WTC11 (cell line): ENCODE measurements at regions of chr6 and their contacts with region 1.

Region 1: DNA sequence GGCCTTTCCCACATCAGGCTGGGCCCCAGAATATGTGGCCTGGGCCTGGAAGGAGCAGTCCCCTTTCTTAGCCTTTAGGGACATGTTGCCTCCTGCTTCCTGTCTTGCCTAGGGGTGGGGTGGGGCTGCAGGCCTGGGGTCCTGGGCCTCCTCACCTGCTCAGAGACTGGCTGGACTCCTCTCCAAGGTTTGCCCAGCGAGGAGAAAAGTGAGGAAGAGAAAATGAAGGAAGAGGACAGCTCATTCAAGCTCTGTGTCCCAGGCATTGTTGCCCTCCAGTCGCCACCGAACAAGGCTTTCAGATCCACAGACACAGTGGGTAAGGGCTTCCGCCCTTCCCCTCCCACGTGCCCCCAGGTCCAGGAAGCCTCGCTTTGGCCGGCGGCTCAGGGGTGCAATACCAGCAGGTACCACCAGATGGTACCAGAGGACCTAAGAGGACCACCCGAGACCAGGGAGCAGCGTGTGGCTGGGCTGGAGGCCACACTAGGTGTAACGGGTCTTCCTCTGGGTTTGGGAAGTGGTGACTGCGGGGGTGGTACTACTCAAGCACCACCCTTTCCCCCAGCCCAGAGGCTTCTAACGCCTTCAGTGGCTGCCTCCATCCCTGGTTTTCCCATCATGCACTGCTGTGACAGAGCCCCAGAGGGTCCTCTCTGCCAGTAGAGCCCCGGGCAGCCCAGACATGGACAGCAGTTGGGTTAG is 5.5 kb upstream of the BAK1 start:
- DNase-seq: peak; percentile 92
- ATAC-seq: peak; percentile 71
- H3K4me3 Mint-ChIP-seq: no peak overlapping the region
- H3K27ac Mint-ChIP-seq: no peak overlapping the region
- H3K4me1 Mint-ChIP-seq: peaks cover 13% of the 10 kb centered on the region
- H3K27me3 Mint-ChIP-seq: no peaks in the 10 kb centered on the region
- CTCF ChIP-seq: peak; percentile 97

Region 2: DNA sequence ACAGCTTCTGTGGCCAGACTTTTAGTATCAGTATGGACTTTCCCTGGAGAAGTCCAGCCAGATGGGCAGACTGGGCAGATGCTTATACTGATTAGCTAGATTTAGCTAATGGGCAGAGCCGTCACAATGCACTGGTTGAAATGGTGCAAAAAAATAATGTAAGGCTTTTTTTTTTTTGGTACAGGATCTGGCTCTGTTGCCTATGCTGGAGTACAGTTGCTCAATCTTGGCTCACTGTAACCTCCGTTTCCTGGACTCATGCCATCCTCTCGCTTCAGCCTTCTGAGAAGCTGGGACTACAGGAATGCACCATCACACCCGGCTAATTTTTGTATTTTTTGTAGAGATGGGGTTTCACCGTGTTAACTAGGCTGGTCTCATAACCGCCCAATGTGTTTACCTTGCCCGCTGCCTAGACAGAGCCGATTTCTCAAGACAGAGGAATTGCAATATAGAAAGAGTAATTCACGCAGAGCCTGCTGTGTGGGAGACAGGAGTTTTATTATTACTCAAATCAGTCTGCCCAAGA is 210.3 kb before region 1 on chr6:
- CTCF ChIA-PET with region 1: no interaction called
- POLR2A ChIA-PET with region 1: no interaction called
- DNase-seq: no peak
- ATAC-seq: no peak
- H3K4me3 Mint-ChIP-seq: no peak overlapping the region
- H3K27ac Mint-ChIP-seq: no peak overlapping the region
- H3K4me1 Mint-ChIP-seq: peaks cover 34% of the 10 kb centered on the region
- H3K27me3 Mint-ChIP-seq: no peaks in the 10 kb centered on the region; the same call in 1 of the 2 replicates
- CTCF ChIP-seq: no peak

Region 3: DNA sequence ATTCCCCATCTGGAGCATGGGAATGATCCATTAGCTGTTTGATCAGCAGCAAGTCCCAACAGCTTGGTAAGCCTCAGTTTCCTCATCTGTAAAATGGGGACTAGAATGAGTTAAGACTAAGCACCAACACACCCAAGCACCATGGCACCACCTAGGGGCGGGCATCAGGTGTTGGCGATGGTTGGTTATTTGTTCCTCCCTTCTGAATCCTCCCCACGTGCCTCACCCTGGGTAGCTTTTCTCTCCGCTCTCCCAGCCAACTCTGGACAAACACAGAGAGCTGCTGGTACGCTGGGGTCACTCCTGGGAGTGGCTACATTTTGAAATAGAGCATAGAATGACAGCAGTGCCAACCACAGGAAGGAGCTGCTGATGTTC is 22.2 kb after region 1 on chr6:
- CTCF ChIA-PET with region 1: interaction called, 25 read pairs
- POLR2A ChIA-PET with region 1: no interaction called
- DNase-seq: no peak
- ATAC-seq: no peak
- H3K4me3 Mint-ChIP-seq: no peak overlapping the region
- H3K27ac Mint-ChIP-seq: no peak overlapping the region
- H3K4me1 Mint-ChIP-seq: peaks cover 45% of the 10 kb centered on the region
- H3K27me3 Mint-ChIP-seq: no peaks in the 10 kb centered on the region; the same call in 1 of the 2 replicates
- CTCF ChIP-seq: no peak

Region 4: GRCh38 chr6:33620856-33621710 is 35.5 kb after region 1 on chr6 and contains the start of gene ITPR3:
- CTCF ChIA-PET with region 1: interaction called, 31 read pairs
- POLR2A ChIA-PET with region 1: interaction called, 3 read pairs
- DNase-seq: no peak
- ATAC-seq: peak; percentile 47
- H3K4me3 Mint-ChIP-seq: peak within 1 kb of the TSS; percentile 91
- H3K27ac Mint-ChIP-seq: no peak within 1 kb of the TSS; the same call in 1 of the 2 replicates
- H3K4me1 Mint-ChIP-seq: peaks cover 46% of the 10 kb centered on the region
- H3K27me3 Mint-ChIP-seq: peaks cover 15% of the 10 kb centered on the region
- CTCF ChIP-seq: no peak
- total RNA-seq, gene ITPR3: 42.5 to 47.3 TPM (median 42.9 TPM) in 3 replicates

Region 5: DNA sequence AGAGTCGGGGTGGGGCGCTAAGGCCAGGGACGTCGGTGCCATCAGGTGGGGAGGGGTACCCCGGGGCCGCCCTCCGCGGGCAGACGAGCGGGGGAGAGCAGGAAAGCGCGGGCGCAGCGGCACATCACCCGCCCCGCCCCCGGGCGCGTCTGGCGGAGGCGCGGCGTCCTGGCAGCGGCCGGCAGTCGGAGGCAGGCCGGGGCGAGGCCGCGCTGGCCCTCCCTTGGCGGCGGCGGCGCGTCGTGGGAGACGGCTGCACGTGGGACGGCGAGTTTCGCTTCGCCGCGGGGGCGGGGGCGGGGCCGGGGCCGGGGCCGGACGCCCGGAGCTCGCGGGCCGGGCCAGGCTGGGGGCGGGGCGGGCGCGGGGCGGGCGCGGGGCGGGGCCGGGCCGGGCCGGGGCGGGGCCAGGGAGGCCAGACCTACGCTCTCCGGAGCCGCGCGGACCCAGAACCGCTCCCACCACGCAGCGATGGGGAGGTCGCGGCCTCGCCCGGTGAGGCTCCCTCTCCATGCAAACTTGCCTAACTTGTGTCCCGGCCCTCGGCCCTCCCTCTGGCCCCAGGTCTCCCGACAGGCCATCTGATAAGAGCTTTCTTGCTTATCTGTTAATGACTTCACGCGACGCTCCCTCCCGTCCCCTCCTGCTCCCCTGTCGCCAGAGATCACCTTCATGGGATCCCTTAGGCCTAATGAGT is 48.1 kb after region 1 on chr6:
- CTCF ChIA-PET with region 1: interaction called, 71 read pairs
- POLR2A ChIA-PET with region 1: no interaction called
- DNase-seq: peak; percentile 58
- ATAC-seq: peak; percentile 69
- H3K4me3 Mint-ChIP-seq: peak overlapping the region; percentile 83
- H3K27ac Mint-ChIP-seq: peak overlapping the region; percentile 47
- H3K4me1 Mint-ChIP-seq: peaks cover 59% of the 10 kb centered on the region
- H3K27me3 Mint-ChIP-seq: peaks cover 9% of the 10 kb centered on the region; the same call in 1 of the 2 replicates
- CTCF ChIP-seq: no peak

Region 6: DNA sequence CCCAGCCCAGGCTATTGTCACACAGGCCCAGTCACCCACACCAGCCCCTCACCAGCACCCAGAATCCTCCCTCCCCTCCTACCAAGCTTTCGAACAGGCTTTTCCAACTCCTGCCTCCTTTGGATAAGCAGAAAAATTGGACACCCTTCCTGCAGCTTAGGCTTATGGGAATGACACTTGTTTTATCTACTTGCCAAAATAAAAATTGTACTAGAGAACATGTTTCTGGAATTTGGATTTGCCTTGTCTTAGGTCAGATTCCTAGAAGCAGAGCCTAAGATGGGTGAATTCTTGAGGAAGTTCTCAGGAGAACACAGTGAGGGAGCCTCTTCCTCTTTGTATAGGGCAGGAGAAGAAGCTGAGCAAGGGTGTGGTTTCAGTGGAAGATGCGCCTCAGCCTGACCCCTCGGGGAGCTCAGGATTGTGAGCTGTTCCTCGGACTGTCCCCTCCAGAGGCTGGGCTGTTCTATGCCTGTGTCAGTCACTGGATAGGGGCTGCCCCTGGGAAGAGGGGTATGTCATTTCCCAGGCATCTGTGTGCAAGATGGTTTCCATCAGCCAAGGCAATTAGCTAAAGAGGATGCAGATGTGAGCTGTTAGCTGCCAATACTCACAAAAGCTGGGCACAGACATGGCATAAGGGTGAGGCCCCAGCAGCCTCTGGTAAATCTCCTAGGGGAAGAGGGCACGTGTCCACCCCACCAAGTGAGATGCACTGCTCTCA is 69.4 kb after region 1 on chr6:
- CTCF ChIA-PET with region 1: interaction called, 13 read pairs
- POLR2A ChIA-PET with region 1: no interaction called
- DNase-seq: no peak
- ATAC-seq: no peak
- H3K4me3 Mint-ChIP-seq: no peak overlapping the region
- H3K27ac Mint-ChIP-seq: no peak overlapping the region
- H3K4me1 Mint-ChIP-seq: peaks cover 12% of the 10 kb centered on the region
- H3K27me3 Mint-ChIP-seq: no peaks in the 10 kb centered on the region
- CTCF ChIP-seq: no peak

Region 7: DNA sequence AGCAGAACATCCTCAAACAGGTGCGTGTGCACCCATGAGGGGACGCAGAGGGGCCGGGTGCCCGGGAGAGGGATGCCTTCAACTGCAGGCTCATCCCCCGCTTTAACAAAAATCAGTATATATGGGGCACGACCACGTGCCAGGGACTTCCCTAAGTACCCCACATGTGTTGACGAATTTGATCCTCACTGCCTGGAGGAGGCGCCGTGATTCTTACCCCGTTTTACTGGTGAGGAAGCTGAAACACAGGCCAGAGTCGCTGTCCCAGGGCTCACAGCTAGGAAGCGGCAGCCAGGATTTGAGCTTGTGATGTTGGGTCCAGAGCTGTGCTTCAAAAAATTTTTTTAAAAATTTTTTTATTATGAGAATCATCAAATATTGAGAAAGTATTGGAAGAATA is 80.4 kb after region 1 on chr6:
- CTCF ChIA-PET with region 1: interaction called, 14 read pairs
- POLR2A ChIA-PET with region 1: no interaction called
- DNase-seq: no peak
- ATAC-seq: peak; percentile 30; the same call in 1 of the 2 replicates
- H3K4me3 Mint-ChIP-seq: no peak overlapping the region
- H3K27ac Mint-ChIP-seq: no peak overlapping the region
- H3K4me1 Mint-ChIP-seq: no peaks in the 10 kb centered on the region
- H3K27me3 Mint-ChIP-seq: no peaks in the 10 kb centered on the region
- CTCF ChIP-seq: no peak

Region 8: GRCh38 chr6:33711140-33712129 is 125.9 kb after region 1 on chr6 and contains the start of gene UQCC2:
- CTCF ChIA-PET with region 1: interaction called, 12 read pairs
- POLR2A ChIA-PET with region 1: no interaction called
- DNase-seq: peak; percentile 96
- ATAC-seq: peak; percentile 96
- H3K4me3 Mint-ChIP-seq: peak within 1 kb of the TSS; percentile 82
- H3K27ac Mint-ChIP-seq: peak within 1 kb of the TSS; percentile 94
- H3K4me1 Mint-ChIP-seq: peaks cover 33% of the 10 kb centered on the region
- H3K27me3 Mint-ChIP-seq: no peaks in the 10 kb centered on the region; the same call in 1 of the 2 replicates
- CTCF ChIP-seq: no peak
- total RNA-seq, gene UQCC2: 65.8 to 105 TPM (median 95.3 TPM) in 3 replicates